HepG2 (cell line): ENCODE measurements at regions of chr11 and their contacts with region 1.

Region 1: GRCh38 chr11:57456960-57457642 is 3.2 kb upstream of the RTN4RL2 start:
- DNase-seq: peak; percentile 82
- ATAC-seq: peak; percentile 62
- H3K4me3 ChIP-seq: peak overlapping the region; percentile 57 to 75 (median 66); a peak in 3 of 6 replicates
- H3K27ac ChIP-seq: peak overlapping the region; percentile 49
- H3K4me1 ChIP-seq: peaks cover 72% of the 10 kb centered on the region
- H3K27me3 ChIP-seq: peaks cover 3 to 14% of the 10 kb centered on the region in 2 experiments; a peak in 4 of 5 replicates
- CTCF ChIP-seq: peak; percentile 97
- EP300 ChIP-seq: no peak
- POLR2A ChIP-seq: no peak
- RAD21 ChIP-seq: peak; percentile 94

Region 2: DNA sequence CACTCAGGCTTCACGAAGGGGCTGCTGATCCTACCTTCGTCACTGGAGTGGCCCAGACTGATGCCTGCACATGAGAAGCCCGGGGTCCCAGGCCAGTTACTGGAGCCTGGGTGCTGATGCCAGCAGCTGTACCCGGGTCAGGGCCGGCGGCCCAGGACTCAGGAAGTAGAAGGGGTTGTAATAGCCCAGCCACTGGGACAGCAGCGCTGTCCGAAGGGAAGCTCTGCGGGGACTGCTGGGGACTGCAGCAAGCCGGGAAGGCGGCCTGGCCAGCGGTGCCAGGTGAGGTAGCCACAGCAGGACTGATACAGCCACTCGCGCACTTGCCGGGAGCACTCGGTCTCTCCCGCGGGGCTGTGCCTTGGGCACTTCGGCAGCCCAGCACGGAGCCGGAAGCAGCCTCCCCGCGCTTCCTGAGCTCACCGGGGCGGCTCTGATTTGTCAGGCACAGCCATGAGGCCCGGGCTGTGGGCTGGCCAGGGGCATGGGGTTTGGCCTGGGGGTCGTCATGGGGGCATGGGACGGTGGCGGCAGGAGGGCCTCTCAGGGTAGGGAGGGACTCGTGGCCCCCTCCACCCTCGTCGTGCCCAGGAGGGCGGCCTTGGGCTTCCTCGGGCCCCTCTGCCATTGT is 1125.1 kb before region 1 on chr11:
- CTCF ChIA-PET with region 1: no interaction called
- POLR2A ChIA-PET with region 1: no interaction called
- in situ Hi-C with region 1: no loop called
- intact Hi-C with region 1: no loop called
- DNase-seq: no peak
- ATAC-seq: no peak
- H3K4me3 ChIP-seq: no peak overlapping the region
- H3K27ac ChIP-seq: no peak overlapping the region
- H3K4me1 ChIP-seq: no peaks in the 10 kb centered on the region
- H3K27me3 ChIP-seq: no peaks in the 10 kb centered on the region
- CTCF ChIP-seq: no peak
- EP300 ChIP-seq: no peak
- POLR2A ChIP-seq: no peak
- RAD21 ChIP-seq: no peak

Region 3: GRCh38 chr11:57379732-57380131 is 77.4 kb before region 1 on chr11:
- CTCF ChIA-PET with region 1: no interaction called
- POLR2A ChIA-PET with region 1: no interaction called
- in situ Hi-C with region 1: no loop called
- intact Hi-C with region 1: no loop called
- DNase-seq: no peak
- ATAC-seq: no peak; the same call in 2 of the 3 replicates
- H3K4me3 ChIP-seq: no peak overlapping the region
- H3K27ac ChIP-seq: no peak overlapping the region
- H3K4me1 ChIP-seq: peaks cover 13% of the 10 kb centered on the region
- H3K27me3 ChIP-seq: no peaks in the 10 kb centered on the region
- CTCF ChIP-seq: no peak
- EP300 ChIP-seq: no peak
- POLR2A ChIP-seq: no peak
- RAD21 ChIP-seq: no peak

Region 4: GRCh38 chr11:57444362-57445121 is 12.6 kb before region 1 on chr11:
- CTCF ChIA-PET with region 1: no interaction called
- POLR2A ChIA-PET with region 1: interaction called, 16 read pairs
- in situ Hi-C with region 1: no loop called
- intact Hi-C with region 1: loop called (anchors 1 kb)
- DNase-seq: no peak
- ATAC-seq: no peak
- H3K4me3 ChIP-seq: no peak overlapping the region
- H3K27ac ChIP-seq: no peak overlapping the region
- H3K4me1 ChIP-seq: peaks cover 55% of the 10 kb centered on the region
- H3K27me3 ChIP-seq: no peaks in the 10 kb centered on the region
- CTCF ChIP-seq: no peak
- EP300 ChIP-seq: no peak
- POLR2A ChIP-seq: no peak
- RAD21 ChIP-seq: no peak

Region 5: GRCh38 chr11:57480409-57481137 is 23.5 kb after region 1 on chr11:
- CTCF ChIA-PET with region 1: interaction called, 10 read pairs
- POLR2A ChIA-PET with region 1: interaction called, 4 read pairs
- in situ Hi-C with region 1: no loop called
- intact Hi-C with region 1: no loop called
- DNase-seq: peak; percentile 61
- ATAC-seq: peak; percentile 71
- H3K4me3 ChIP-seq: peak overlapping the region in 1 of 3 experiments; percentile 28; a peak in 1 of 6 replicates
- H3K27ac ChIP-seq: peak overlapping the region; percentile 65
- H3K4me1 ChIP-seq: peaks cover 30% of the 10 kb centered on the region
- H3K27me3 ChIP-seq: no peaks in the 10 kb centered on the region
- CTCF ChIP-seq: peak; percentile 90
- EP300 ChIP-seq: no peak
- POLR2A ChIP-seq: no peak; a peak in 1 of 4 replicates
- RAD21 ChIP-seq: peak; percentile 23; the same call in 1 of the 2 replicates

Region 6: GRCh38 chr11:57515332-57516060 is 58.4 kb after region 1 on chr11 and contains the start of gene SLC43A1:
- CTCF ChIA-PET with region 1: no interaction called
- POLR2A ChIA-PET with region 1: interaction called, 10 read pairs
- in situ Hi-C with region 1: no loop called
- intact Hi-C with region 1: no loop called
- DNase-seq: peak; percentile 46
- ATAC-seq: peak; percentile 73
- H3K4me3 ChIP-seq: peak within 1 kb of the TSS; percentile 76 to 95 (median 86)
- H3K27ac ChIP-seq: peak within 1 kb of the TSS; percentile 82
- H3K4me1 ChIP-seq: peaks cover 61% of the 10 kb centered on the region
- H3K27me3 ChIP-seq: no peaks in the 10 kb centered on the region
- CTCF ChIP-seq: peak; percentile 32
- EP300 ChIP-seq: no peak
- POLR2A ChIP-seq: peak in 1 of 2 experiments; percentile 75; a peak in 3 of 4 replicates
- RAD21 ChIP-seq: no peak
- total RNA-seq, gene SLC43A1: 40.0 and 72.3 TPM in 2 replicates

Region 7: GRCh38 chr11:57567515-57568329 is 110.6 kb after region 1 on chr11 and contains the start of gene UBE2L6:
- CTCF ChIA-PET with region 1: no interaction called
- POLR2A ChIA-PET with region 1: no interaction called
- in situ Hi-C with region 1: no loop called
- intact Hi-C with region 1: loop called (anchors 1 kb)
- DNase-seq: no peak
- ATAC-seq: peak; percentile 89
- H3K4me3 ChIP-seq: peak within 1 kb of the TSS; percentile 82 to 98 (median 84)
- H3K27ac ChIP-seq: peak within 1 kb of the TSS; percentile 40
- H3K4me1 ChIP-seq: peaks cover 24% of the 10 kb centered on the region
- H3K27me3 ChIP-seq: no peaks in the 10 kb centered on the region; a peak in 1 of 5 replicates
- CTCF ChIP-seq: peak; percentile 95; the same call in 1 of the 2 replicates
- EP300 ChIP-seq: no peak
- POLR2A ChIP-seq: peak in 1 of 2 experiments; percentile 55; a peak in 1 of 4 replicates
- RAD21 ChIP-seq: no peak; the same call in 1 of the 2 replicates
- total RNA-seq, gene UBE2L6: 30.3 and 37.6 TPM in 2 replicates